ENCODE measurements at regions of chr6 and their contacts with region 1.

Region 1: DNA sequence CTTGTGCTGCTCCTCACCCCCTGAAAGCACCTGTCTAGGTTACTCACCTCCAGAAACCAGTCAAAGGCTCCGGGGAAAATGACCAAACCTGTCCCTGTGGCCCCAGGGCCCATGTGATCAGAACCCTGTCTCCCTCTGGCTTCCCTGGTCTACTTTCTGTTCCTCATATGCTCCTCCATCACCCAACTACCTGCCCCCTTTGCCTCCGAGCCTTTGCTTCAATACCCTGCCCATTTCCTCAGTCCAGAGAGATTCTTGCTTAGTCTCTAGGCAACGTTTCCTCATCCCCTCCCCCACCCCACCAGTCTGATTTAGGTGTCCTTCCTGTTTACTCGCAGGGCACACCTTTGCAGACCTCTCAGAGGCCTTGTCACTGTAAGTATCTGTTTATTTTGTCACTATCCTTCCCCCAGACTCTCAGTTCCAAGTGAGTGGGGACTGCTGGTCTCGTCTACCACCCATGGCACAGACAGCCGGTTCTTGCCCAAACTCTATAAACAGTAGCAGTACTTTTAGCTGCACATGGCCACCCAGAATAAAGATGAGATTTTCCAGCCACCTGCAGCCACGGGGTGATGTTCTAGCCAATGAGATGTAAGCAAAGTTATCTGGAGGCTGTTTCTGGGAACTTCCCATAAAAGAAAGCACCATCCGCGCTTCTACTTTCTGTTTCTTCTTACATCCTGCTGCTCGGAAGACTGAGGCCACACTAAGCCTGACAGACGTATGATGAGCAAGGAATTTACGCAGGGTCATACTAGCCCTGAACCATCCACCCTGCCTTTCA is 13.3 kb downstream of the ELOVL5 start:
- DNase-seq: peak; percentile 79
- H3K4me3 Mint-ChIP-seq: peak overlapping the region; percentile 80
- H3K27ac Mint-ChIP-seq: peak overlapping the region; percentile 99
- H3K4me1 Mint-ChIP-seq: peaks cover 85% of the 10 kb centered on the region
- H3K27me3 Mint-ChIP-seq: no peaks in the 10 kb centered on the region

Region 2: GRCh38 chr6:52304983-52305390 is 1030.4 kb before region 1 on chr6:
- CTCF ChIA-PET with region 1: no interaction called
- intact Hi-C with region 1: loop called (anchors 10 kb)
- DNase-seq: no peak
- H3K4me3 Mint-ChIP-seq: peak overlapping the region; percentile 27
- H3K27ac Mint-ChIP-seq: peak overlapping the region; percentile 77
- H3K4me1 Mint-ChIP-seq: peaks cover 65% of the 10 kb centered on the region
- H3K27me3 Mint-ChIP-seq: no peaks in the 10 kb centered on the region

Region 3: DNA sequence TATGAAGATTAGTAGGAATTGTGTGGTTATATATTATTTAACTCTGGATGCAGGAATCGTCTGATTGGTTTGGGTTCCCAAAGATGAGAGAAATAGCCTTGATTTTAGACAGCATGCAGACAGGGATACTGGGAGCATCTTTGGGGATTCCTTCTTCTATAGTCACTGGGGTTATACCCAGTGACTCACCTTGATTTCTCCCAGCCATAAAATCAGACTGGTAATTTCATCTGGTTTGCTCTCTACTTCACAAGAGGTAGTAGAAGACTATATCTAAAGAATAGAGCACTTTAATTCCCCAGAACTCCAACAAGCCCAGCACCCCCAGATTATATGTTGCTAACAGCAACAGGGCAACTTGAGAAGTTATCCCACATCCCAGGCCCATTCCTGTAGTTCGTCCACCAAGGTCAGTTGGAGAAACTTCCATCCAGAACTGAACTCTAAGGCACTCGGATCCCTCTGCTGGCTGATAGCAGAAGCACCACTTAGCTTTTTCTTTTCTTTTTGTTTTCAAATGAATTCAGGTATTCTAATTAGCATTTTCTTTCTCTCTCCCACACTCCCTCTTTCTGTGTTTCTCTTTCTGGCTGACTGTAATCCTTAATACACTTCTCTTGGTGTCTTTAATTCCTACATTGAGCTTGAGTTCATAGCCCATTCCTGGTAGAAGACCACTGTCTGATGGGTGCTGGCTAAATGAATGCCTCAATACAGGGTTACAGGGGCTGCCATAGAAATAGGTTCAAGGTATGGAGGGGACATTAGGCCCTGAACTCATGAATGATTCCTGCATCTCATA is 935.7 kb before region 1 on chr6:
- CTCF ChIA-PET with region 1: no interaction called
- intact Hi-C with region 1: loop called (anchors 5 kb)
- DNase-seq: peak; percentile 64
- H3K4me3 Mint-ChIP-seq: no peak overlapping the region
- H3K27ac Mint-ChIP-seq: peak overlapping the region; percentile 73
- H3K4me1 Mint-ChIP-seq: peaks cover 72% of the 10 kb centered on the region
- H3K27me3 Mint-ChIP-seq: no peaks in the 10 kb centered on the region

Region 4: GRCh38 chr6:53302678-53303360 is 32.6 kb before region 1 on chr6:
- CTCF ChIA-PET with region 1: interaction called, 3 read pairs
- intact Hi-C with region 1: loop called (anchors 1 kb)
- DNase-seq: no peak
- H3K4me3 Mint-ChIP-seq: peak overlapping the region; percentile 28
- H3K27ac Mint-ChIP-seq: peak overlapping the region; percentile 48
- H3K4me1 Mint-ChIP-seq: peaks cover 76% of the 10 kb centered on the region
- H3K27me3 Mint-ChIP-seq: no peaks in the 10 kb centered on the region

Region 5: DNA sequence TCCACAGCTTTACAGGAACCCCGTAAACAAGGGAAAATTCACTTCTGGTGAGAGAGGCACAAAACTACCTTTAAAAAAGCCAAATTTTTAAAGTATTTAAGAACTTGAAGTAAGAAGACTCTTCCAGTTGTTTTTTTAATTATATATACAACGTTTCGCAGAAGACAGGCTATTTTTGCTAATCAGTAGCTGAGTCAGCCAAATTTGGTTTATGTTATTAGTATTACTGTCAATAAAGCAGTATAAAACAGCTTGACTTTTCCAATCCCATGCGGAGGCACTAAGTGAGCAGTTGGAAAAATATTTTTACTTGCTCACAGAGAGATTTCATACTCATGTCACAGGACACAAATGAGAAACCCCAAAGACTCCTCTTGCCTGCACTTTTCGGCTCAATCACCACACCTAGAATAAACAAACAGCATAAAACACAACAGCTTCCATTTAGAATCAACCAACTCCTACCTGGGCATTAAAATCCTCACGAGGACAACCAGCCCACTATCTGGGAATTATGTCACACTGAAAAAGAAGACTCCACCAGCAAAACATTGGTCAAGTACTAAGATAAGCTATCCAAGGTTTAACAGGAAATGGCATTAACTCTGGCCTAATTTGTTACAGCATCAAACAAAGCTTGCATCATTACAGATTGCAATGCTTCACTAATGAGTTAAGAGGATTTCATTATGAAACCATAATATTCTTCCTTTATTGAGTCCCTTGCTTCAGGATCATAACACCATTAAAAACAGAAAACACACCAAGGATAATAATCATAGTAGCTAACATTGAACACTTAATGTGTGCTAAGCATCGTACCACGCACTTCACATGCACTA is 13.0 kb before region 1 on chr6:
- CTCF ChIA-PET with region 1: interaction called, 4 read pairs
- intact Hi-C with region 1: loop called (anchors 1 kb)
- DNase-seq: no peak
- H3K4me3 Mint-ChIP-seq: no peak overlapping the region
- H3K27ac Mint-ChIP-seq: peak overlapping the region; percentile 24
- H3K4me1 Mint-ChIP-seq: peaks cover 56% of the 10 kb centered on the region
- H3K27me3 Mint-ChIP-seq: no peaks in the 10 kb centered on the region

Region 6: DNA sequence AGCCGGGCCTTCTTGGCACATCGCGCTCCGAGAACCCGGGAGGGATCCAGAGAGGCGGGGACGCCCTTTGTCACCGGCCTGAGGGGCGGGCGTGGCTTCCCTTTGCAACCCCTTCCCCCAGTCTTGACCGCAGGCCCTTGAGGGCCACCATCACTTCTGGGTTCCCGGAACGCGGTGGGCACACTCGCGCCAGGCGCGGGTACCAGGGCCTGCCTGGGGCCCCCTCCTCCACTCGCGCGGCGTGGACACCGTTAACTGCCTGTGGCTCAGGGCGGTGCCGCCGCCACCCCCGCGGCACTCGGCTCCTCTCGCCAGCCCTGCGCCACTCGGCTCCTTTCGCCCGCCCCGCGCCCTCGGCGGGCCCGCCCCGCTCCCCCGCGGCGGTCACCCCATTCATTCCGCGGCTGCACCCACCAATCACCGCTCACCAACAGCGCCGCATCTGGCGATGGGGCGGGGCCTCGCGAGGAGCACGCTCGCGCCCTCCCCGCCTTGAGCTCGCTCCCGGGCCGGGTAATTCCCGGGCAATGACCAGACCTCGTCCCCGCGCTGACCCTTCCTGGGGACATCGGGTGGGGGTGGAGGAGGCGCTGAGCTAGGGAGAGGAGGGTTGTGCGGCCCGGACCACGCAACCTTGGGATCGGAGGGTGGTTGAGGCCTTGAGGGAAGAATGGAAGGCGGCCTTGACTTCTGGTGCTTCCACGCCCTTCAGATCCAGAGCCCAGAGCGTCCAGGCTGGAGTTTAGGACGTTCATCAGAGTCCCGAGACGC is 23.9 kb after region 1 on chr6:
- CTCF ChIA-PET with region 1: interaction called, 5 read pairs
- intact Hi-C with region 1: loop called (anchors 1 kb)
- DNase-seq: peak; percentile 94
- H3K4me3 Mint-ChIP-seq: peak overlapping the region; percentile 90
- H3K27ac Mint-ChIP-seq: peak overlapping the region; percentile 96
- H3K4me1 Mint-ChIP-seq: peaks cover 39% of the 10 kb centered on the region
- H3K27me3 Mint-ChIP-seq: no peaks in the 10 kb centered on the region